OCI-LY7 (cell line): ENCODE measurements at regions of chr3 and their contacts with region 1.

Region 1: DNA sequence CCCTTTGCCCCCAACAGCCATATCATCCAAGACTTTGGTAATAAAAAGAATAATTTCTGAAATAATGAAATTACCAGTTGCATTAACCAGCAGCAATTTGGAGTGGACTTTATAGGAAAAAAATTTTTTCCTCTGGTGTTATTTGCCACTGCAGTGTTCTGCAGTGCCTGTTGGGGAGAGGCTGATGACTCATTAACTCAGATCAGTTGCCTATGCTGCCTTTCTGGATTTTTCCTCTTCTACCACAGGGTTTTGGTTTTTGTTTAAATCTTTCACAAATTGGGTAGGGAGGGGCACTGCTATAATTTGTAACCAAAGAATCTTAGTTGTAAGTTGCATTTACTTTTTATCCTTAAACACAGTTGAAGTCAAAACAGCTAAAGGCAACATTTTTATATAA is 22.7 kb downstream of the ATP6V1A start:
- DNase-seq: no peak
- H3K4me3 ChIP-seq: no peak overlapping the region
- H3K27ac ChIP-seq: no peak overlapping the region
- H3K4me1 ChIP-seq: no peaks in the 10 kb centered on the region
- CTCF ChIP-seq: no peak

Region 2: GRCh38 chr3:113523241-113523640 is 246.3 kb before region 1 on chr3:
- CTCF ChIA-PET with region 1: no interaction called
- POLR2A ChIA-PET with region 1: no interaction called
- intact Hi-C with region 1: no loop called
- DNase-seq: no peak
- H3K4me3 ChIP-seq: no peak overlapping the region
- H3K27ac ChIP-seq: no peak overlapping the region
- H3K4me1 ChIP-seq: no peaks in the 10 kb centered on the region
- CTCF ChIP-seq: no peak

Region 3: DNA sequence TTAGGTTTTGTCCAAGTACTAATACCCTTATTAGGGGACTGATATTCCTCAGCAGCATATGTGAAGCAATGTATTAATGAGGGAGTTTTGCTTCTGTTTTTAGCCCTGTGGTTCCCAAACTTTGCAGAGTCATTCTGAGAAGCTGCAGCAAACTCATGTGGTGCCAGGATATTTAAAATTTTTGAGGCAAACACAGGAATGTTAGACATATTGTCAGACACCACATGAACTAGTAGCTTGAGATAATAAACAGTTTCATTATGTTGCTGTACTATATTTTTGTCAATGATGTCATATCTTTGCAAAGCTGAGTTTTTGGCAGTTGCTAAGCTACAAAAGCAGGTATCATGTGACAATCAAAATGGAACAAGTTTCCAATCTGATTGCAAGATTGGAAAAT is 13.9 kb after region 1 on chr3:
- CTCF ChIA-PET with region 1: no interaction called
- POLR2A ChIA-PET with region 1: interaction called, 11 read pairs
- intact Hi-C with region 1: no loop called
- DNase-seq: no peak
- H3K4me3 ChIP-seq: no peak overlapping the region
- H3K27ac ChIP-seq: no peak overlapping the region
- H3K4me1 ChIP-seq: peaks cover 10% of the 10 kb centered on the region
- CTCF ChIP-seq: no peak

Region 4: GRCh38 chr3:113825090-113825489 is 55.5 kb after region 1 on chr3:
- CTCF ChIA-PET with region 1: no interaction called
- POLR2A ChIA-PET with region 1: no interaction called
- intact Hi-C with region 1: no loop called
- DNase-seq: peak; percentile 11
- H3K4me3 ChIP-seq: no peak overlapping the region
- H3K27ac ChIP-seq: no peak overlapping the region
- H3K4me1 ChIP-seq: peaks cover 14% of the 10 kb centered on the region
- CTCF ChIP-seq: peak; percentile 38; the same call in 1 of the 2 replicates